ENCODE measurements at regions of chr3 and their contacts with region 1.

Region 1: GRCh38 chr3:27712136-27713077 is 9.7 kb downstream of the EOMES start:
- DNase-seq: peak; percentile 77
- H3K4me3 ChIP-seq: peak overlapping the region; percentile 24 to 70 (median 34)
- H3K27ac ChIP-seq: peak overlapping the region in 1 of 4 donors; percentile 17
- H3K4me1 ChIP-seq: peaks cover 16 to 38% (median 29%) of the 10 kb centered on the region in 4 donors
- H3K27me3 ChIP-seq: peaks cover 84% of the 10 kb centered on the region
- CTCF ChIP-seq: peak; percentile 62 to 78 (median 75)
- EP300 ChIP-seq: no peak
- POLR2A ChIP-seq: no peak

Region 2: DNA sequence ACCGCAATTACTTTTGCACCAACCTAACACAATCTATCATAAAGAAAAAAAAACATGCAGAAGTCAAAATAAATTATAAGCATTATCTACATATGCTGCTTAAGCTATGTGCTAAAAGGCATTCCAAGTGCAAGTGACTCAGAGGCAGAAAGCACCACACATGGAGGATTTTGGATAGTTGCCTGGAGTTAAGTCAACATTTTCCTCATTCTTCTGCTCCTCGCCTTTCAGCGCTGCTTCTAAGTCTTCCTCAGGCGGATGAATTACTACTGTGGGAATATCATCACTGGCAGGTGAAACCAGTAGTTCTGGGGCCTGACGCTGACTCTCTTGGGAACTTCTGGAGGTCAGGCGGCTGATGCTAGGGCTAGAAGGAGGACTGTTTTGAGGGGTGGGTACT is 281.3 kb before region 1 on chr3:
- in situ Hi-C with region 1: no loop called
- intact Hi-C with region 1: no loop called
- DNase-seq: no peak
- H3K4me3 ChIP-seq: no peak overlapping the region
- H3K27ac ChIP-seq: peak overlapping the region in 2 of 4 donors; percentile 6 to 18
- H3K4me1 ChIP-seq: peaks cover 0 to 9% (median 4%) of the 10 kb centered on the region in 4 donors
- H3K27me3 ChIP-seq: no peaks in the 10 kb centered on the region
- CTCF ChIP-seq: no peak
- EP300 ChIP-seq: no peak
- POLR2A ChIP-seq: no peak

Region 3: DNA sequence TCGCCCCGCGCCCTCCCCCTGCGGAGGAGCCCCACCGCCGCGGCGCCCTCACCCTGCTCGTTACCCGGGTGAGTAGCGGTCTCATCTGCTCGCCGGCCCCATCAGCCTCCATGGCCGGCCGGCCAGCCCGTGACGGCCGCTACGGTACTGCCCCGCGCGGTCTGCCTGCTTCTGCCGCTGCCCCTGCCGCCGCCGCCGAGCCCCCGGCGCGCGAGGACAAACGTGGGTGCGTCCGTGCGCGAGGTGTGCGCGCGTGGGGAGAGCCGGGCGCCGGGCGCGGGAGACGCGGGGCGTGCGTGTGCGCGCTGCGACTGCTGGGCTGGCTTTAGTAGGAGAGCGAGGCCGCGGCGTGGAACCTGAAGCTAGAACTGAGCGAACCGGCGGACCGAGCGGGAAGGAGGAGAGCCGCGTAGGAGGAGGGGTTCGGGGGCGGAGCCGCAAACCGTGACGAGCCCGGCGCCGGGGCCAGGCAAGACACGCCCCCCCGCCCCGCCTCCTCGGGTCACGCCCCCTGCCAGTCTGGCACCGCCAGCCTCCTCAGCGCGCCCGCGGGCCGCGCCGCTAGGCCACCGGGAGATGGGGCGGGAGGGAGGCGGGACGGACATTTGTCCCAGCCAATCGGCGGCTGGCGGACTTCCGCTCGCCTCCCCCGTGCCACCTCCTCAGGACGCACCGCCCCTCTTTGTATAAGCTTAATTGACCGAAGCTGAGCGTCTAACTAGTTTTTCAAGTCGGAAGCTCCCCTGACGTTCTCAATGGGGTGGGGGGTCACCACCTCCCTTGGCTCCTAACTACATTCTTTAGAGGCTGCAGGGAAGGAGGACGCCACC is 228.2 kb before region 1 on chr3 and contains the start of gene SLC4A7:
- in situ Hi-C with region 1: no loop called
- intact Hi-C with region 1: no loop called
- DNase-seq: peak; percentile 99
- H3K4me3 ChIP-seq: peak within 1 kb of the TSS; percentile 54 to 84 (median 76)
- H3K27ac ChIP-seq: peak within 1 kb of the TSS; percentile 91 to 97 (median 94)
- H3K4me1 ChIP-seq: peaks cover 0 to 40% (median 16%) of the 10 kb centered on the region in 4 donors
- H3K27me3 ChIP-seq: no peaks in the 10 kb centered on the region
- CTCF ChIP-seq: no peak
- EP300 ChIP-seq: no peak
- POLR2A ChIP-seq: peak; percentile 90
- total RNA-seq, gene SLC4A7: 22.7 to 45.6 (median 35.4) TPM

Region 4: GRCh38 chr3:27590437-27591298 is 121.7 kb before region 1 on chr3:
- in situ Hi-C with region 1: no loop called
- intact Hi-C with region 1: no loop called
- DNase-seq: no peak
- H3K4me3 ChIP-seq: peak overlapping the region in 1 of 4 donors; percentile 5
- H3K27ac ChIP-seq: peak overlapping the region; percentile 48 to 64 (median 59)
- H3K4me1 ChIP-seq: peaks cover 0 to 22% (median 5%) of the 10 kb centered on the region in 4 donors
- H3K27me3 ChIP-seq: no peaks in the 10 kb centered on the region
- CTCF ChIP-seq: no peak
- EP300 ChIP-seq: no peak
- POLR2A ChIP-seq: no peak

Region 5: DNA sequence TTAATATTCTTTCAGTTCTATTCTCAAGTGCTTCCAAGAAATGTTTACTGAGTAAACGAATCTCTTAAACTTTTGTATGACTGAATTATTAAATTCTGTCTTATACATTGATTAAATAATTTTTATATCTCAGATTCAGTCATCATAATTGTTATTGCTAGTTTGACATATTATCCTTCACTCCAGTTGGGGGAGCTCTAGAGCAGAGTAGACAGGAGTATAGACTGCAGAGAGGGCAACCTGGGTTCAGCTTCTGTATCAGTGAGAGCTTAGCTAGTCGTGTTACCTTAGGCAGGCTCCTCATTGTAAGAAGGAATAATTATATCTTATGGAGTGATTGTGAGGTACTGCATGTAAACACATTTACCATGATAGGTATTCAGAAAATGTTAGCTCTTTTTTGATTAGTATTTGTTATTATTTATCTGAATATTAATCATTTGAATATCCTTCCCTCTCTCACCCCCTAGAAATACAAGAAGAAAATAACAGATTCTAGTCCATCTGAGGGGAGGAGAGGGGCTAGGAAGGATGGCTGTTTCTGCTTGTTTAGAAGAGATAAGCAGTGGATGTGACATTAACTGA is 605.1 kb after region 1 on chr3:
- in situ Hi-C with region 1: loop called in 2 of 4 experiments (anchors 25 kb)
- intact Hi-C with region 1: no loop called
- DNase-seq: peak; percentile 13
- H3K4me3 ChIP-seq: no peak overlapping the region
- H3K27ac ChIP-seq: no peak overlapping the region
- H3K4me1 ChIP-seq: no peaks in the 10 kb centered on the region
- H3K27me3 ChIP-seq: no peaks in the 10 kb centered on the region
- CTCF ChIP-seq: peak; percentile 31 to 51 (median 43)
- EP300 ChIP-seq: no peak
- POLR2A ChIP-seq: no peak

Region 6: DNA sequence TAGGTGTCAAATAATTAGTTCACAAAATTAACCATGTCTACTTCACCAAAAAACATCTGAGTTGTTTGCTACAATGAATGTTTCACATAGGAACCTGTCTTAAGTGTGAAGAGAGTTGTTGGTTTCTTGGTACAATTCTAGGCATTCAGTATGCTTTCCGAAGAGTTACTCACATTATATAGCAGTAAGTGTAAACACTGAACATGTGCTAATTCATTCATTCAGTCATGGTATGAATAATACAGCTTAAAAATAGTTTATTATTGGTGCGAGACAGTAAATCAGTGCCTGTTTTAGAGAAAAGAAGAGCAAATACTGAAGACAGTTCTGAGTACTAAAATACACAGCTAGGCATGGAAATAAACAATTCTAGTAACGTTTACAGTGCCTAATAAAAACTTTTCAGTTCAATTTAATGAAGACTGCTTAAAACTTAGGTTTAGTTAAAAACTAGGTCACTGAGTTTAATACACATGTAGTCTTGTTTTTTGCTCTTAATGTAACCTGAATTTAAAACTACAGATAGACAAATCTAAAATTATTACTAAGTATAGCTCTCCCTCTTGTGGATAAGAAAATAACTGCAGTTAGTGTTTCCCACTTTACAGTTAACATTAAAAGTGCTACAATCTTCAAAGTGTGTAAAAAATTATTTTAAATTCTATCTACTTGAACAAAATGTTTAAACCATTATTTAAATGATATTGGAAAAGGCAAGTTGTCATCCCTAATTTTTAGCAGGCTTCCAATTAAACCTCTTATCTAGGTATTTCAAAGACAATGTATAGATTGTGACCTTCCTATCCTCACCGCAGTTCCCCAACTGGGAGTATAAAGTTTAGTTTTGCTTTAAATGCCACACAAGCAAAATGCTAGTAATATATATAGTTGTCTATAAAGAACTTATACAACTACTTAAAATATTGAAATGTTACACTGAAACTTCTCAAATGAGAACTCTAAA is 616.1 kb after region 1 on chr3:
- in situ Hi-C with region 1: loop called (anchors 5 to 25 kb)
- intact Hi-C with region 1: loop called (anchors 2 kb)
- DNase-seq: no peak
- H3K4me3 ChIP-seq: no peak overlapping the region
- H3K27ac ChIP-seq: no peak overlapping the region
- H3K4me1 ChIP-seq: peaks cover 0 to 3% (median 0%) of the 10 kb centered on the region in 4 donors
- H3K27me3 ChIP-seq: no peaks in the 10 kb centered on the region
- CTCF ChIP-seq: peak; percentile 66 to 75 (median 74)
- EP300 ChIP-seq: no peak
- POLR2A ChIP-seq: no peak

Region 7: DNA sequence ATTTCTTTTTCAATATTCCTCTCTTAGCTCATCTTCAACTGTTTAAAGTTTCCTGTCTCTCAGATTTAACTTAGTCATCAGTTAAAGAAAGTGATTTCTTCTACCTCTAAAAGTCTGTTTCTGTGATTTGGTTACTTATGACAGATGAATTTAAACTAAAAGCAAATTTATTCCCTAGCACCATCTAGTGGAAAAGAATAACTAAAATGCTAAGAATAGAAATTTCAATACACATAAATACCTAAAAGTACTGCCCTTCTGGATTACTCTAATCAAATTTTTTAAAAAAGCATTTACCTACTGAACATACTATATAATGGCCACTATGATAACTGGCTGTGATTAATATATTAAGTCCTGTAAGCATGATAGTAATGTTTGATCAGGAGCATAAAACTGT is 622.1 kb after region 1 on chr3:
- in situ Hi-C with region 1: loop called in 2 of 4 experiments (anchors 5 to 10 kb)
- intact Hi-C with region 1: loop called (anchors 2 kb)
- DNase-seq: no peak
- H3K4me3 ChIP-seq: no peak overlapping the region
- H3K27ac ChIP-seq: no peak overlapping the region
- H3K4me1 ChIP-seq: no peaks in the 10 kb centered on the region
- H3K27me3 ChIP-seq: no peaks in the 10 kb centered on the region
- CTCF ChIP-seq: peak in 1 of 5 experiments; percentile 7
- EP300 ChIP-seq: no peak
- POLR2A ChIP-seq: no peak

Measured in transverse colon (tissue), 4 donors.